Panc1 (cell line): ENCODE measurements at regions of chr10 and their contacts with region 1.

Region 1: DNA sequence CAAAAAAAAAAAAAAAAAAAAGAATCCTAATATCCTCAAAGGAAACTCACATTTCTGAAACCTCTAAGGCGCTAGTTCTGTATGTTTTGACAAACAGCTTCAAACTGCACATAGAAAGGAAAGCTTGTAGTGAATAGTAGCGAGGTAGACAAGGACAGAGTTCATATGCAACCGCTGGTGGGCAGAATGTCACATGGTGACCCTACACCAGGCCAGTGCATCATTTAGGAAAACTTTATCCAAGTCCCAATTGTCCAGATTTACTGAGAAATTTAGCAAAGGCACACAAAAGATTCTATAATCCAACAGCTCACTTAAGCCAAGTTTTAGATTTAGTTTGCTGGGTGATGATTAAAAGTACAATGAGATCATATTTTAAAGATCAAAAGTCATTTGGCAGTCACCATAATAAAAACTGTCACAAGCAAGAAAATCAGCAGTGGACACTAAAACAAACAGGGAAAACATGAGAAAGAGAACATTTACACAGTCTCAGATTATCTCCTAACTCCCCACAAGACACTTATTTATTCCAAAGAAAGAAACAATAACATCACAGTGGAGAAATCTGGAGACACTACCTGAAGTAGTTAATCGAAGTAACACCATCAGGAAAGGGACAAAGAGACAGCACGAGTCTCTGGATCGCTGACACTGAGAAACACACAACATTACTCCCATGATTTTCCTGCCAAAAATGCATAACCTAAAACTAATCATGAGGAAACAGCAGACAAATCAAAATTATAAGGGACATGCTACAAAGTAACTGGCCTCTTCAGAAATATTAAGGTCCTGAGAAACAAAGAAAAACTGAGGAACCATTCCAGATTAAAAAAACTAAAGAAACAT is 20.2 kb downstream of the FAM204A start:
- DNase-seq: no peak
- ATAC-seq: no peak
- H3K4me3 ChIP-seq: no peak overlapping the region
- H3K27ac ChIP-seq: no peak overlapping the region
- H3K4me1 ChIP-seq: no peaks in the 10 kb centered on the region
- H3K27me3 ChIP-seq: no peaks in the 10 kb centered on the region
- CTCF ChIP-seq: no peak

Region 2: DNA sequence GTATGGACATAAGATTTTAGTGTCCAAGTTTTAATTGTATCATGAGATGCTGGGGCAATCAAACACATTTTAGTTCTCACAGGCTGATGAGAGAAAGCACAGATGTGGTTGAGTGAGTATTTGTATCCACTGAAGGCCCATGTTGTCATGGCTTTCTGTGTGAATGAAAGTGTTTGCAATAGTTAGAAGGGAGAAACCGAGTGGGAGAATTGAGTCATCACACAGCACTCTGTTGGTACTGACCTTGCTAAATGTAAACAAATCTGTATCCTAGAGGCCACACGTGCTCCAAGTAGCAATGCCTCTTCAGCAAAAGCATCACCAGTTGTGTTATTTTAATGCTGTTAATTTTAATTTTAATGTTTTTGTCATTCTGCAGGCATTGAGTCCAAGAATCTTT is 658.2 kb before region 1 on chr10:
- CTCF ChIA-PET with region 1: no interaction called
- POLR2A ChIA-PET with region 1: interaction called, 11 read pairs
- in situ Hi-C with region 1: no loop called
- intact Hi-C with region 1: no loop called
- DNase-seq: peak; percentile 41
- ATAC-seq: no peak
- H3K4me3 ChIP-seq: no peak overlapping the region
- H3K27ac ChIP-seq: no peak overlapping the region
- H3K4me1 ChIP-seq: no peaks in the 10 kb centered on the region
- H3K27me3 ChIP-seq: no peaks in the 10 kb centered on the region
- CTCF ChIP-seq: no peak

Region 3: GRCh38 chr10:118220346-118220850 is 101.6 kb before region 1 on chr10:
- CTCF ChIA-PET with region 1: no interaction called
- POLR2A ChIA-PET with region 1: no interaction called
- in situ Hi-C with region 1: no loop called
- intact Hi-C with region 1: no loop called
- DNase-seq: no peak
- ATAC-seq: no peak
- H3K4me3 ChIP-seq: no peak overlapping the region
- H3K27ac ChIP-seq: no peak overlapping the region
- H3K4me1 ChIP-seq: no peaks in the 10 kb centered on the region
- H3K27me3 ChIP-seq: no peaks in the 10 kb centered on the region
- CTCF ChIP-seq: no peak

Region 4: GRCh38 chr10:118629211-118629610 is 307.3 kb after region 1 on chr10:
- CTCF ChIA-PET with region 1: no interaction called
- POLR2A ChIA-PET with region 1: no interaction called
- in situ Hi-C with region 1: no loop called
- intact Hi-C with region 1: no loop called
- DNase-seq: no peak
- ATAC-seq: no peak
- H3K4me3 ChIP-seq: no peak overlapping the region
- H3K27ac ChIP-seq: no peak overlapping the region
- H3K4me1 ChIP-seq: no peaks in the 10 kb centered on the region
- H3K27me3 ChIP-seq: peaks cover 8% of the 10 kb centered on the region; the same call in 1 of the 2 replicates
- CTCF ChIP-seq: no peak